ENCODE measurements at regions of chr7 and their contacts with region 1.

Region 1: GRCh38 chr7:132318352-132319318 is 257.6 kb downstream of the PLXNA4 start:
- DNase-seq: peak; percentile 67
- H3K4me3 ChIP-seq: no peak overlapping the region
- H3K27ac ChIP-seq: no peak overlapping the region
- H3K27me3 ChIP-seq: no peaks in the 10 kb centered on the region
- CTCF ChIP-seq: peak; percentile 90

Region 2: GRCh38 chr7:131890176-131890575 is 428.5 kb before region 1 on chr7:
- CTCF ChIA-PET with region 1: interaction called, 11 read pairs
- POLR2A ChIA-PET with region 1: no interaction called
- DNase-seq: no peak
- H3K4me3 ChIP-seq: no peak overlapping the region
- H3K27ac ChIP-seq: no peak overlapping the region
- H3K27me3 ChIP-seq: no peaks in the 10 kb centered on the region
- CTCF ChIP-seq: no peak

Region 3: DNA sequence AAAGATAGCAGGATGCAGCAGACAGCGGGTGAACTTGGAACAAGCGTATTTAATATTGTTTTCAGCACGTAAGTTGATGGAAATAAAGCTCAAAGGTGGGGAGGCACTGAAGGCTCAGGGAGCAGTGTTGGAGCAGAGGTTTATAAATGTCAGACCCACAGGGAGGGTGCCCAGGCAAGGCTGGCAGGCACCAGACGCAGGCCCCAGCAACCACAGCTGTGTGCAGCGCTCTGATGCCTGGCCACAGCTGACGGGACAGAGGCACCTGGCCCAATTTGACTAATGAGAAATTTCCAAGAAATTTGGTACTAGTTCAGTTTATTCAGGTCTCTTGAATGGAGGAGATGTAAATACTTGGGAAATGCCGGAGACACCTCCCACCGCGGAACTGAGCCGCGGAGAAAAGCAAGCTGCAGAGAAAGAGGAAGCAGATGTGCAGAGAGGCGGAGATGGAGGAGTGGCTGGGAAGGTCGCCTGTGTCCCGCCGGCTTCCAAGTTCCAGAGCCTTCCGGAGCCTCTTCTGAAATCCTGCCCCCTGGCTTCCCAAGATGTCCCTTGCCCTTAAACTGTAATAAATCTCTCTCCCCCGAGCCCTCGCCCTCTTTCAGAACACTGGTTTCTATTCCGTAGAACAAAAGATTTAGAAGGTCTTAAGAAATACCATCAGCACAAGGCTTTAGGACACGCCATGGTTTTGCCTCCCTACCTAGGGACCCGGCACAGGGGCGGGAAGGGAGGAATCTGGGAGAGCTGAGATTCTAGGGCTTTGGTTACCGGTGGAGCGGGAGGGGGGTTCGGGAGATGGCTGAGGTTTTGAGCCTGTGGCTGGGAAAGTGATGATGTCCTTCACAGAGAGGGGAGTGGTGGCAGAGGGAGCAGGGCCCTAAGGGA is 296.0 kb after region 1 on chr7:
- CTCF ChIA-PET with region 1: no interaction called
- POLR2A ChIA-PET with region 1: no interaction called
- DNase-seq: no peak
- H3K4me3 ChIP-seq: peak overlapping the region; percentile 20
- H3K27ac ChIP-seq: no peak overlapping the region
- H3K27me3 ChIP-seq: peaks cover 13% of the 10 kb centered on the region
- CTCF ChIP-seq: no peak

Measured in AG04450 (cell line).